ENCODE measurements at regions of chr9 and their contacts with region 1.

Region 1: DNA sequence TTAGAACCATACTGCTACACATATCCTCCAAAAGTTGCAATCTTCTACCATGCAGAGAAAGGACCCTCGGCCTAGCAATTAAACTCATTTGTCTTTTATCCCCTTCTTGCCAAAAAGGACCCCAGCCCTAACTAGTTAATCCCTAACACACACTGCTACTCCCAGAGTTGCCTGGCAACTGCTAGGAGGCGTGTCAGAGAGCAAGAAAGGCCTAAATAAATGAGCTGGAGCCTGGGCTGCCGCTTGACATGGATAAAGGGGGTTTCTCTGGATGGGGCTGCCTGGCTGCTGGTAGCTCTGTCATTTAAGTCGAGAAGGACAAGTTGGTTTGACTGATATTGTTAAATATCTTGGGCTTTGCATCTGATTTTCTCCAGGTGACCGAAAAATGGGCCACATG is 194.8 kb downstream of the CRB2 start:
- DNase-seq: no peak
- ATAC-seq: no peak

Region 2: GRCh38 chr9:123406691-123407216 is 144.0 kb before region 1 on chr9:
- intact Hi-C with region 1: no loop called
- DNase-seq: peak; percentile 22
- ATAC-seq: no peak

Region 3: GRCh38 chr9:123742009-123742767 is 191.4 kb after region 1 on chr9:
- intact Hi-C with region 1: no loop called
- DNase-seq: peak; percentile 46
- ATAC-seq: peak; percentile 78 to 84

Region 4: GRCh38 chr9:124022201-124023121 is 471.7 kb after region 1 on chr9:
- intact Hi-C with region 1: loop called in 1 of 2 experiments (anchors 10 kb)
- DNase-seq: no peak
- ATAC-seq: no peak

Measured in left cardiac atrium (tissue), 4 donors.